Heart right ventricle (tissue), 16 donors: ENCODE measurements at regions of chr11 and their contacts with region 1.

Region 1: DNA sequence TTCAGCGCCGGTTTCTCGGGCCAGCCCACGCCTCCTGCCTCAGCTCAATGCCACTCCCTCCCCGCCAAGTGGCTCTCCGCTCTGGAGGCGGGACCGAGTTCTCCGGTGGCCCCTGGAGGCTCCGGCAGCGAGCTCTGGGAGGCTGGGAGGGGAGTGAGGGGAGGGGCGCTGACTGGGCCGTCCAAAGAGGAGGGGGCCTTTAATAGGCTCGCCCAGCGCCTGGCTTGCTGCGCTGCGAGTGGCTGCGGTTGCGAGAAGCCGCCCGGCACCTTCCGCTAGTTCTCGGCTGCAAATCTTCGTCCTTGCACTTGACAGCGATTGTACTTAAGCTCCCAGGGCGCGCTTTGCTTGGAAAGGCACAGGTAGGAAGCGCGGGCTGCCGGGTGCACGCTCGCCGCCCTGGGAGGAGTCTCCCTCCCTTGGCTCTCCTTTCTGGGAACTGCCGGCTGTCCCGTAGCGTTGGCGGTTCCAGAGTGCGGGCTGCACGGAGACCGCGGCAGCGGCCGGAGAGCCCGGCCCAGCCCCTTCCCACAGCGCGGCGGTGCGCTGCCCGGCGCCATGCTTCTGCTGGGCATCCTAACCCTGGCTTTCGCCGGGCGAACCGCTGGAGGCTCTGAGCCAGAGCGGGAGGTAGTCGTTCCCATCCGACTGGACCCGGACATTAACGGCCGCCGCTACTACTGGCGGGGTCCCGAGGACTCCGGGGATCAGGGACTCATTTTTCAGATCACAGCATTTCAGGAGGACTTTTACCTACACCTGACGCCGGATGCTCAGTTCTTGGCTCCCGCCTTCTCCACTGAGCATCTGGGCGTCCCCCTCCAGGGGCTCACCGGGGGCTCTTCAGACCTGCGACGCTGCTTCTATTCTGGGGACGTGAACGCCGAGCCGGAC is at the start of gene ADAMTS15:
- DNase-seq: peak; percentile 85 to 91
- ATAC-seq: peak; percentile 76 to 86 (median 83)
- H3K4me3 ChIP-seq: peak within 1 kb of the TSS; percentile 69 to 98 (median 80)
- H3K27ac ChIP-seq: peak within 1 kb of the TSS; percentile 41 to 91 (median 82)
- H3K4me1 ChIP-seq: peaks cover 8 to 61% (median 50%) of the 10 kb centered on the region in 9 donors
- H3K27me3 ChIP-seq: peaks cover 0 to 40% (median 0%) of the 10 kb centered on the region in 7 donors
- CTCF ChIP-seq: no peak
- total RNA-seq, gene ADAMTS15: 7.7 to 49.4 (median 14.2) TPM

Region 2: GRCh38 chr11:130522284-130522961 is 73.8 kb after region 1 on chr11:
- intact Hi-C with region 1: loop called in 8 of 10 experiments (anchors 2 to 5 kb)
- DNase-seq: peak; percentile 91 to 94
- ATAC-seq: peak; percentile 94 to 97 (median 97)
- H3K4me3 ChIP-seq: peak overlapping the region in 1 of 10 donors; percentile 8
- H3K27ac ChIP-seq: peak overlapping the region; percentile 75 to 94 (median 88)
- H3K4me1 ChIP-seq: peaks cover 21 to 52% (median 44%) of the 10 kb centered on the region in 9 donors
- H3K27me3 ChIP-seq: no peaks in the 10 kb centered on the region
- CTCF ChIP-seq: no peak

Region 3: GRCh38 chr11:130601141-130601540 is 152.5 kb after region 1 on chr11:
- intact Hi-C with region 1: loop called in 1 of 10 experiments (anchors 10 kb)
- DNase-seq: peak; percentile 72 to 79
- ATAC-seq: peak; percentile 83 to 98 (median 96)
- H3K4me3 ChIP-seq: no peak overlapping the region
- H3K27ac ChIP-seq: peak overlapping the region in 8 of 10 donors; percentile 4 to 73 (median 57)
- H3K4me1 ChIP-seq: peaks cover 0 to 29% (median 19%) of the 10 kb centered on the region in 9 donors
- H3K27me3 ChIP-seq: no peaks in the 10 kb centered on the region
- CTCF ChIP-seq: no peak

Region 4: DNA sequence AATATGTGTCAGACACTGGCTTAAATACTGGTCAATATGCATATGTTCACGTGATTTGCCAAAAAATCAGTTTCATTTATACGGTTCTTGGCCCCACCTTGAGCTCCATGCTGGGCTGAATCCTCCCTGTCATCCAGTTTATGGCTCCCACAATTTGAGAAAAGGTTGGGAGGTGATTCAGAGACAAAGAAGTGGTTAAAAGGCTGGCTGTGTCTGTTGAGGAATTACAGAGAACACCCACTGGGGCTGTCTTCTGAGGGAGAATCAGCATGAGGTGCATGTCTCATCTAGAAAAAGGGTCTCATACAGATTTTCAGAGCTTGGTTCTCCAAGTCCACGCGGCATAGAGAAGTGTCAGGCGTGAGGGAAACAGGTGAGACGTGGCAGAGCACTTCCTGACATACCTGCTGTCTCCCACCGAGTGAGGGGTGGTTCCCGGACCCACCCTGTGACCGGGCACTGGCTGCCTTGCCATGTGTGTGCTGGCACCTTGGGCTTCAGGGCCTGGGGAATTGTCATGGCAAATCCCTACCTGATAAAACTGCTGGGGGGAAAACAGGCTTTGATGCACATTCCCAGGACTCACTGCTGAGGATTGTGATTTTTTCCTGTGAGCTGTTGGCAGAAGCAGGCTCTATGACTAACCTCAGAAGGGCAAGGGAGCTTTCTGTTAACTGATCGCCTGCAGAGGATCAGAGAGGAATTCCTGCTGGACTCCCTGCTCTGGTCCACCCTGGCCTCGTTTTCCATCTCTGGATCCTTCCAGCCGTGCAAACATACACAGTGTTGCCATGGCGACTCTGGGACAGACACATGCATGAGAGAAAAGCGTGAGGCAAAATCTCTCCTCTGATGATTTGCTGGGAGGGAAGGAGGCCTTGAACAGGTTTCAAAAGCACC is 223.4 kb after region 1 on chr11:
- intact Hi-C with region 1: loop called in 5 of 10 experiments (anchors 2 to 10 kb)
- DNase-seq: peak; percentile 59 to 83
- ATAC-seq: peak; percentile 56 to 85 (median 74)
- H3K4me3 ChIP-seq: no peak overlapping the region
- H3K27ac ChIP-seq: peak overlapping the region in 8 of 10 donors; percentile 15 to 57 (median 49)
- H3K4me1 ChIP-seq: peaks cover 8 to 49% (median 43%) of the 10 kb centered on the region in 9 donors
- H3K27me3 ChIP-seq: no peaks in the 10 kb centered on the region
- CTCF ChIP-seq: no peak

Region 5: DNA sequence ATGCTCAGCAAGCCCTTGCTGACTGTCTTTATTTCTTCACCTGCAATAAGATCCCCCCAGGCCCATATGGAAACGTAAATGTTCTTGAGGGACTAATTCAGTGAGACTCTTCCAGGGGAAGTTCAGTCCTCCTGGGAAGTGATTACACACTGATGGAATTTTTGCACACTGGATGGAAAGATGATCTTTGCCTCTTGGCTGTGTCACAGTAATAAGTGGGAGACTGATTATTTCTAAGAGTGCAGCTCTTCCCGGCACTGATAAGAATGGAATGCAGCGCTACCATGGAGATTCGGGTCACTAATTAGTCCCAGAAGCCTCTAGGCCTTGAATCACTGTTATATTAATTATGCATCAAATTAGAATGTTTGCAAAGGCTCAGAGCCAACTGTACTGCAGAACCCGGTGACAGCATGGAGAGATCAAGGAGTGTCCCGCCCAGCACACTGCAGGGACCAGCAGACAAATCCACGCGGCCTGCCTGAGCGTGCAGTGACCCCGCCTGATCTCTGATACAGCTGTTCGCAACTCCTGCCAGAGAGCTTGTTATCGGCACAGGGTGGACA is 289.3 kb after region 1 on chr11:
- intact Hi-C with region 1: loop called in 3 of 10 experiments (anchors 5 to 10 kb)
- DNase-seq: peak; percentile 72 to 74
- ATAC-seq: peak; percentile 93 to 97 (median 96)
- H3K4me3 ChIP-seq: no peak overlapping the region
- H3K27ac ChIP-seq: peak overlapping the region; percentile 13 to 68 (median 58)
- H3K4me1 ChIP-seq: peaks cover 0 to 23% (median 21%) of the 10 kb centered on the region in 9 donors
- H3K27me3 ChIP-seq: no peaks in the 10 kb centered on the region
- CTCF ChIP-seq: no peak

Region 6: DNA sequence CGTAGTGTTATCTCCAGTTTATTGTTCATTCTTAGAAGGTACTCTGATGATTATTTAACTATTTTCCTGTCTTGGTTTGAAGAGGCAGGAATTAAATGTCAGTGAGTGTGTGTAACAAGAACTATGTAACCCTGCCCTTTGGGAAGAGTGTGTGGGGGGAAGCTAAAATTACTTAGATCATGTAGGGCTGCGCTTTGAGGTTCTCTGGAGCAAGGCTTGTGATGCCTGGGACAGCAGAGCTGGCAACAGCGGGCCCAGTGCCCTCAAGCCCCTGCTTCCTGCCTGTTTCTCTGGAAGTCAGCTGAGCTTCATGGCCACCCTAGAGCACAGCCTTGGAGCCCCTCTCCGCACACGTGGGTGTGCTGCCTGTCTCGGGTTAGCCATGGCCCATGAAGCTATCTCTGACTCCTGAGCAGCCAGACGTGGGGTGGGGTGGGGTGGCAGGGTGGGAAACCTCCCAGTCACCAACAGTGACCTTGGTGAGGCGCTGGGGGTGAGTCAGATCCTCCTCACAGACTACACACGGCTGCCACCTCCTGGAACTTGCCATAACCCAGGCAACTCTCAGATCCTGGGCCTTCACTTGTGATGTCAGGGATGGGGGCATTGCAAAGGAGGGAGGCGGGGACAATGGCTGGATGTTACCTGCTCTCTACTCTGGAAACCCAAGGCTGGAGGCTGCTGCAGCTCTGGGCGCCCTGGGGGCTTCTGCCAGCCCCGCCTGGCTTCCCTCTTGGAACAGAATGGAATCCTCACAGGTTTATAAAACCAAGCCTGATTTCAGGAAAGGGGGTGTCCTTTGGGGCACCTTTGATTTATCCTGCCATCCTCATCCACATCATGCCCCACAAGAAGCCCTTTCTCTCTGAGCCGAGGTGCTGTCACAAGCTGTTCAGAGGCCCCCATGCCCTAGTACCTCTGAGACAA is 379.1 kb after region 1 on chr11:
- intact Hi-C with region 1: loop called in 4 of 10 experiments (anchors 2 to 5 kb)
- DNase-seq: peak; percentile 63 to 64
- ATAC-seq: peak; percentile 76 to 92 (median 88)
- H3K4me3 ChIP-seq: no peak overlapping the region
- H3K27ac ChIP-seq: peak overlapping the region in 9 of 10 donors; percentile 36 to 73 (median 64)
- H3K4me1 ChIP-seq: peaks cover 3 to 43% (median 28%) of the 10 kb centered on the region in 9 donors
- H3K27me3 ChIP-seq: no peaks in the 10 kb centered on the region
- CTCF ChIP-seq: peak in 8 of 9 donors; percentile 44 to 64 (median 53)